Heart right ventricle (tissue), 16 donors: ENCODE measurements at regions of chr17 and their contacts with region 1.

Region 1: DNA sequence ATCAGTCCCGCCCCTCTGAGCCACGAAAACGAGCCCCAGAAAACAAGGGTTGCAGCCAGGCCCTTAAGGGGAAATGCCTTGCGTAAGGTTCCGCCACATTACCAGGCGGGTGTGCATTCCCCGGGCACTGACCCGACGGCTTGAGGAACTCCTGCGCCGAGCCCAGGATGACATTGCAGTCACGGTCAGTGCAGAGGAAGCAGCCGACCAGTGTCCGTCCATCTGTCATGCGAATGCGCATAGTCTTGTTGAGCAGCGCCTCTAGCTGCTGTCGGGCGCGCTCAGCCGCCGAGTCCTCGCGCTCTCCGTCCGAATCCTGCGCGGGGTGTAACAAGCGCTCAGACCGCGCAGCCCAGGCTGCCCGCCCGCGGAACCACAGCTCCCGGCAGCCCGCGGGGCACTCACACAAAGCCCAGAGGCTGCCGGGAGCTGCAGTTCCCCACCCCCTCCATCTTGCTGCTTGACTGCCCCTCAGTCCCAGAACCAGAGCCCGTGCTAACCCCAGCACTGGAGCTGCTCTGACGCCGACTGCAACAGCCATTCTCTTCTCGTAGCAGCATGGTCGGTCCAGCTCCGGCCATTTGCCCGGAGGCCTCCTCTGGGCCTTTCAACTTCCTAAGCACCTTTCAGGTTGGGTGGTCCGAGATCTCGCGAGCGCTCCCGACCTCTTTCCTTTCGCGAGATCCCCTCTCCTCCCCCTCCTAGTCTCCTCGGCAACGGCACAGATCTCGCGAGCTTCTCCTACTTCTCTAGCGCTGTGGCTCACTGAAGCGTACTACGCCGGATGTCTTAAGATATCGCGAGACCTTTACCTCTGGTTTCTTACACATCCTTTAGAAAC is at the start of gene NAA38:
- DNase-seq: peak; percentile 93 to 98
- ATAC-seq: peak; percentile 87 to 92 (median 90)
- H3K4me3 ChIP-seq: peak within 1 kb of the TSS; percentile 60 to 72 (median 68)
- H3K27ac ChIP-seq: peak within 1 kb of the TSS; percentile 79 to 98 (median 93)
- H3K4me1 ChIP-seq: peaks cover under 1 to 53% (median 38%) of the 10 kb centered on the region in 9 donors
- H3K27me3 ChIP-seq: no peaks in the 10 kb centered on the region
- CTCF ChIP-seq: peak; percentile 14 to 80 (median 45)
- total RNA-seq, gene NAA38: 59.2 to 115 (median 73.0) TPM

Region 2: GRCh38 chr17:7720125-7720524 is 137.0 kb before region 1 on chr17:
- intact Hi-C with region 1: no loop called
- DNase-seq: no peak
- ATAC-seq: no peak
- H3K4me3 ChIP-seq: no peak overlapping the region
- H3K27ac ChIP-seq: no peak overlapping the region
- H3K4me1 ChIP-seq: peaks cover 3 to 22% (median 8%) of the 10 kb centered on the region in 9 donors
- H3K27me3 ChIP-seq: peaks cover under 1 to 65% (median 29%) of the 10 kb centered on the region in 7 donors
- CTCF ChIP-seq: no peak

Region 3: DNA sequence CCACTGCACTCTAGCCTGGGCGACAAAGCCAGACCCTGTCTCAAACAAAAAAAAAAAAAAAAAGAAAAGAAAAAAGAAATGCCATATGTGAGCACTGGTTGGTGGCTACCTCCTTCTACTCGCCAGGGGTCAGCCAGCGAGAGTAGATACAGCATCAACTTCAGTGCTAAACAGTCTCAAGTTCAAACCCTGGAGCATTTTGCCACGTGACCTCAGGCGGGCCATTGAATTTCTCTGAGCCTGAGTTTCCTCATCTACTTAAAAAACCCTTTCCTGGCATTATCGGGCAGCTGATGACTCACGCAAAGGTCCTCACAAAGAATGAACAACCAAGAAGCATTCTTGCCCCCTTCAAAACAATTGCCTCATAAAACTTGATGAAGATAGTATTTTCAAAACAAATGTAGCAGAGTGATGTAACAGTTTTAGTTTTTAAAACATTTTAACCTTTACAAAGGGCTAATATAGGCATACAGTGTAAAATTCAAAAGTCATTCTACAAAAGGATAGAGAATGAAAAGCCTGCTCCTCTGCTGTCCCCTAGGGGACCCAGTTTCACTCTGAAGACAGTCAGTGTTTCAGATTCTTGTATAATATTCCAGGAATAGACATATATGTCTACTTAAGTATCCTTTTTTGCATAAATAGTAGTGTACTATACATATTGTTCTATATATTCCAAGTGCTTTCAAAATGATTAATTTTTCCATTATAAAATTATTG is 111.2 kb before region 1 on chr17:
- intact Hi-C with region 1: loop called in 3 of 10 experiments (anchors 5 to 10 kb)
- DNase-seq: no peak
- ATAC-seq: peak in 1 of 8 donors; percentile 37
- H3K4me3 ChIP-seq: no peak overlapping the region
- H3K27ac ChIP-seq: no peak overlapping the region
- H3K4me1 ChIP-seq: peaks cover 0 to 18% (median 8%) of the 10 kb centered on the region in 9 donors
- H3K27me3 ChIP-seq: peaks cover 0 to 18% (median 9%) of the 10 kb centered on the region in 7 donors
- CTCF ChIP-seq: peak in 1 of 9 donors; percentile 8

Region 4: GRCh38 chr17:7782237-7782636 is 74.9 kb before region 1 on chr17:
- intact Hi-C with region 1: no loop called
- DNase-seq: no peak
- ATAC-seq: no peak
- H3K4me3 ChIP-seq: no peak overlapping the region
- H3K27ac ChIP-seq: no peak overlapping the region
- H3K4me1 ChIP-seq: no peaks in the 10 kb centered on the region
- H3K27me3 ChIP-seq: peaks cover 0 to 39% (median 6%) of the 10 kb centered on the region in 7 donors
- CTCF ChIP-seq: no peak

Region 5: DNA sequence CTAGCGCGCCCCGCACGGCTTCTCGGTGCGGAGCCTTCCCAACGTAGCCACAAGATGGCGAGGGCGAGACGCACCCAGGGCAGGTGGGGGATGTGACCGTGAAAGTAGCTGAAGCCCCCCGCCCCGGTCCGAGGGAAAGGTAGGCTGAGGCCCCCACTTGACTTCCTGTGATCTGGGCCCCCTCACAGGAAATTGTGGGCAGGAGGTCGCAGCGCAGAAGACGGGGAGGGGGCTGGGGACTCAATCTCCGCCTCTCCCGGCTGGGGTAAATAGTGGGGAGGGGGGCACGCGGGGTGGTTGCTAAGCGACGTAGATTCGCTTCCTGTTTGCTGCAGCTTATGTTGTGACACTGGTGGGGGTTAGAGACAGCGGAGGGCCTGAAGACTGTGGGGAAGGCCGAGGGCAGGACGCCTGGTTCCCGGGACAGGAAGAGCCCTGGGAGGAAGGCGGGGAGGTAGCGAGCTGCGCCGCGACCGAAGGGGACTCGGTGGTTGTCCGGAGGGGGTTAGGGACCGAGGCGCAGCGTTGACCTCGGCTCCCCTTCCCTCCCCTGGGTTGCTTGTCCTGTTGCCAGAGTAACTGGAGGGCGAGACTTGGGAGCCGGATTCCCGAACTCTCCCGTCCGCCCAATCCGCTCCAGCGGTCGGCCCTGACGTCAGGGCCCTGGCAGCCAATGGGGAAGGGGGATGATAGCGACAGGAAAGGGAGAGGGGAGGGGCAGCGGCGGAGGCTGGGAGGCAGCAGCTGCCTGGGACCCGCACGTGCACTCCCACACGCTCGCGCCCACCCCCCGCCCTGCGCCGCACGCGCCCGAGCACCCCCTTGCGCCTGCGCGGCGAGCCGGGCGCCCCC is 21.9 kb before region 1 on chr17:
- intact Hi-C with region 1: loop called in 4 of 10 experiments (anchors 1 to 2 kb)
- DNase-seq: peak; percentile 97 to 99
- ATAC-seq: peak; percentile 79 to 83 (median 82)
- H3K4me3 ChIP-seq: peak overlapping the region; percentile 59 to 95 (median 80)
- H3K27ac ChIP-seq: peak overlapping the region; percentile 94 to 100 (median 98)
- H3K4me1 ChIP-seq: peaks cover 7 to 48% (median 42%) of the 10 kb centered on the region in 9 donors
- H3K27me3 ChIP-seq: peaks cover 0 to 3% (median 0%) of the 10 kb centered on the region in 7 donors
- CTCF ChIP-seq: peak; percentile 71 to 93 (median 81)

Region 6: DNA sequence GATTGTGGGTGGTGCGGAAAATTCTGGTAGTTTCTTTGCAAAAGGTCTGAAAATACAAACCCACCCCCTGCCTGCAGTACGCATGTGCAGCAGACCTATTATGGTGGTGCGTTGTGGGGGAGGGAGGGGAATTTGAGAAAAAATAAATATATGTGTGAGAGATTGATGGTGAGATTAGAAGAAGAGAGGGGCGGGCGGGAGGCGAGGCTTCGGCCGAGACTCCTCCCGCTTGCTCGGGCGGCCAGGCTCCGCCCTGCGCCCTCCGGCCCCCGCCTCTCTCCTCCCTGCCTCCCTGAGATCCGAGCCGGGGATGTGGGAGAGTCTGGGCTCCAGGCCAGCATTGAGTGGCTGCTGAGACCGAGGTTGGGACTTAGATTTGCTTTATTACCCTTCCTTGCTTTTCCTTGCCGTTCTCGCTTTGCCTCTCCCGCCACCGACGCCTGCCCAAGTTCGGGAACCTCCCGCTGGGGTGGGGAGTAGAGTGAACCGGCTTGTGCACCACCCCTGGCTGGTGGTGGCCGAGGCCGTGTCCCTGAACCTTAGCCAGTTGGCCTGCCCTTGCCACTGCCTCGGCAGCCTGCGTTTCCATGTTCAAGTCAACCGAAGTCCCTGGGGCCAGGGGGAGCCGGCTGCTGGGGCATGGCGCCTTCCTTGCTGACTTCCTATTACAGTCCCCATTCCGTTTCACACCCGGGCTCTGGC is 30.5 kb after region 1 on chr17:
- intact Hi-C with region 1: loop called in 2 of 10 experiments (anchors 2 kb)
- DNase-seq: peak; percentile 91 to 94
- ATAC-seq: peak; percentile 85 to 93 (median 88)
- H3K4me3 ChIP-seq: peak overlapping the region; percentile 23 to 96 (median 78)
- H3K27ac ChIP-seq: peak overlapping the region; percentile 72 to 98 (median 92)
- H3K4me1 ChIP-seq: peaks cover 19 to 68% (median 50%) of the 10 kb centered on the region in 9 donors
- H3K27me3 ChIP-seq: no peaks in the 10 kb centered on the region
- CTCF ChIP-seq: peak in 1 of 9 donors; percentile 14

Region 7: GRCh38 chr17:7905421-7905820 is 48.3 kb after region 1 on chr17:
- intact Hi-C with region 1: no loop called
- DNase-seq: no peak
- ATAC-seq: no peak
- H3K4me3 ChIP-seq: no peak overlapping the region
- H3K27ac ChIP-seq: no peak overlapping the region
- H3K4me1 ChIP-seq: no peaks in the 10 kb centered on the region
- H3K27me3 ChIP-seq: no peaks in the 10 kb centered on the region
- CTCF ChIP-seq: no peak

Region 8: DNA sequence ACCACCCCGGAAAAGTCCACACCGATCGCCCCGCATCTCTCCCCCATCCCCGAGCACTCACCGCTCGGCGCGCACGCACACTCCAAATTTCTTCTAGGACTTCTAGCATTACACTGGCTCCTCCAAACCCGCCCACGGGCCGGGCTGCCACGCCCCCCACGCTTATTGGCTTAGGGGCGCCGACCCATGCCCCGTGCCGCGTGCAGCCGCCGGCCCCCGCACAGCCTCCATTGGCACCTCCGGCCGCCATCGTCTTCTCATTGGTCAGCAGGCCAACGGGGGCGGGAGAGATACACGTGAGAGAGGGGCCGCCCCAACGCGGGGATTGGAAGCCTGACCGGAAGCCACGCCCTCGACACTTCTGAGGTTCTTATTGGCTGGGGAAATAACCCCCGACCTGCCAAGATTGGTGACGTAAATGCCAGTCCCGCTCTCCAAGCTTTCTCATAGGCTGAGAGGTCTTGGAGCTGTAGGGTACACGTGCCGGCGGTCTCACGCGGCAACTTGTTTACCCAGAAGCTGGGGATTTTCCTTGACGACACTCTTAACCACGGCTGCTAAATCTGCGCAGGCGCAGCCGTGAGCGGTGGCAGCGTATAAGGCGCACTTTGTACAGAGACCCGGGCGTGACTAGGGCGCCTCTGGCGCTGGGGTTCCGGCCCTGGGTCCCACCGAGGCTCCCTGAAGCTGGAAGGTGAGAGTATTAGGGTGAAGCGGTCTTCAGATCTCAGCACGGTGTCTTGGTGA is 299.3 kb after region 1 on chr17:
- intact Hi-C with region 1: loop called in 1 of 10 experiments (anchors 10 kb)
- DNase-seq: peak; percentile 100
- ATAC-seq: peak; percentile 65 to 75 (median 68)
- H3K4me3 ChIP-seq: peak overlapping the region; percentile 66 to 91 (median 81)
- H3K27ac ChIP-seq: peak overlapping the region; percentile 97 to 100 (median 100)
- H3K4me1 ChIP-seq: peaks cover 19 to 91% (median 51%) of the 10 kb centered on the region in 9 donors
- H3K27me3 ChIP-seq: no peaks in the 10 kb centered on the region
- CTCF ChIP-seq: peak in 4 of 9 donors; percentile 12 to 42 (median 28)